Ovary (tissue), 10 donors: ENCODE measurements at regions of chr21 and their contacts with region 1.

Region 1: GRCh38 chr21:25979845-25980616 is 190.5 kb downstream of the APP start:
- DNase-seq: no peak
- H3K4me3 ChIP-seq: no peak overlapping the region
- H3K27ac ChIP-seq: no peak overlapping the region
- H3K4me1 ChIP-seq: peaks cover 4% of the 10 kb centered on the region
- H3K27me3 ChIP-seq: no peaks in the 10 kb centered on the region
- CTCF ChIP-seq: no peak
- EP300 ChIP-seq: no peak
- POLR2A ChIP-seq: no peak

Region 2: GRCh38 chr21:26320596-26320995 is 340.6 kb after region 1 on chr21:
- intact Hi-C with region 1: loop called in 1 of 4 experiments (anchors 5 kb)
- DNase-seq: no peak
- H3K4me3 ChIP-seq: no peak overlapping the region
- H3K27ac ChIP-seq: no peak overlapping the region
- H3K4me1 ChIP-seq: no peaks in the 10 kb centered on the region
- H3K27me3 ChIP-seq: no peaks in the 10 kb centered on the region
- CTCF ChIP-seq: no peak
- EP300 ChIP-seq: no peak
- POLR2A ChIP-seq: no peak